GM12878 (cell line): ENCODE measurements at regions of chr19 and their contacts with region 1.

Region 1: DNA sequence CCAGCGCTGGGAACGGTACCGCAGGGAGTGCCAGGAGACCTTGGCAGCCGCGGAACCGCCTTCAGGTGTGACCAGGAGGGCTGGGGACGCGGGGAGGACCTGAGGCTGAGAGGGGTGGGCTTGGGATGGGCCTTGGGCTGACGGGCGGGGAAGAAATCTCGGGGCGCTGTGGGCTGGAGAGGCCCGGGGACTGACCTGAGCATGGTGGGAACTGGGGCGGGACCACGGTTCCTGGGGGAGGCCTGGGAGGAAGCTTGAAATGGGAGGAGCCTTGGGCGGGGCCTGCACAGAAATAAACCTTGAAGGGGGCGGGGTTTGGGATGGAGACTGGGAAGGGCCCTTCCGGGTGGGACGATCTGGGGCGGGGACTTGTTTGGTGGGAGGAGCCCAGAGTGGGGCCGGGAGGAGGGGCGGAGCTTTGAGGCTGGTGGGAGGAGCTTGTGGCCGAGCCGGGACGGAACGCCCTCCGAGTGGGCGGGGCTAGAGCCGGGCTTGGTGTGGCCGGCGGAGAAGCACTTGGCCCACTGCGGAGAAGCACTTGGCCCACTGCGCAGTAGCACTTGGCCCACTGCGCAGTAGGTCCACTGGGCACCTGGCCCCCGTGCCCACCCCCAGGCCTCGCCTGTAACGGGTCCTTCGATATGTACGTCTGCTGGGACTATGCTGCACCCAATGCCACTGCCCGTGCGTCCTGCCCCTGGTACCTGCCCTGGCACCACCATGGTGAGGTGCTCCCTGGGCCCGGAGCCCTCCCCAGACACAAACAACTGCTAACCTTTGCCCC is 2.8 kb downstream of the GIPR start:
- DNase-seq: peak; percentile 62
- ATAC-seq: peak; percentile 66
- H3K4me3 ChIP-seq: peak overlapping the region; percentile 94
- H3K27ac ChIP-seq: peak overlapping the region; percentile 37; the same call in 1 of the 2 replicates
- H3K4me1 ChIP-seq: peaks cover 9% of the 10 kb centered on the region
- H3K27me3 ChIP-seq: no peaks in the 10 kb centered on the region
- CTCF ChIP-seq: no peak
- EP300 ChIP-seq: no peak
- POLR2A ChIP-seq: no peak
- RAD21 ChIP-seq: no peak

Region 2: DNA sequence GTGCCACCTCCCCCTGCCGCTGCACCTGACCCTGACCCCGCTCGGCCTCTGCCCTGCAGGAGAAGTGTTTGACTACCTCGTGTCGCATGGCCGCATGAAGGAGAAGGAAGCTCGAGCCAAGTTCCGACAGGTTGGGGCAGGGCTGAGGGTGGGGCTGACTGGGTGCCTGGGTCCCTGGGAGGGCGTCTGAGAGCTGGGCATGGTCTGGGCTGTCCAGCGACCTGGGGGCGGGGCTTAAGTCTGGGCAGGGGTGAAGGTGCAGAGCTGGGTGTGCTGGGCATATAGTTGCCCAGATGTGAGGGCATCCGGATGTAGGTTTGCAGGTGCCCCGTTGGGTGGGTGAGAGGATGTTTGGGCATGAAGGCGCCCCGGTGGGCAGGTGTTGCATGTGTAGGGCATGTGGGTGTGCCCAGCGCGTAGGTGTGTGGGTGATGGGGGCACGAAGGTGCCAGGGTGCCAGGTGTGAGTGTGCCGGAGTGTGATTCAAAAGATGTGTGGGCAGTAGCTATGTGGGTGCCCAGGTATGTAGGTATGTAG is 406.0 kb before region 1 on chr19:
- CTCF ChIA-PET with region 1: no interaction called
- POLR2A ChIA-PET with region 1: no interaction called
- RAD21 ChIA-PET with region 1: no interaction called
- SMC1A ChIA-PET with region 1: no interaction called
- in situ Hi-C with region 1: no loop called
- intact Hi-C with region 1: no loop called
- DNase-seq: no peak
- ATAC-seq: no peak
- H3K4me3 ChIP-seq: no peak overlapping the region
- H3K27ac ChIP-seq: no peak overlapping the region
- H3K4me1 ChIP-seq: no peaks in the 10 kb centered on the region
- H3K27me3 ChIP-seq: no peaks in the 10 kb centered on the region
- CTCF ChIP-seq: no peak
- EP300 ChIP-seq: no peak
- POLR2A ChIP-seq: peak; percentile 38; the same call in 1 of the 2 replicates
- RAD21 ChIP-seq: no peak

Region 3: DNA sequence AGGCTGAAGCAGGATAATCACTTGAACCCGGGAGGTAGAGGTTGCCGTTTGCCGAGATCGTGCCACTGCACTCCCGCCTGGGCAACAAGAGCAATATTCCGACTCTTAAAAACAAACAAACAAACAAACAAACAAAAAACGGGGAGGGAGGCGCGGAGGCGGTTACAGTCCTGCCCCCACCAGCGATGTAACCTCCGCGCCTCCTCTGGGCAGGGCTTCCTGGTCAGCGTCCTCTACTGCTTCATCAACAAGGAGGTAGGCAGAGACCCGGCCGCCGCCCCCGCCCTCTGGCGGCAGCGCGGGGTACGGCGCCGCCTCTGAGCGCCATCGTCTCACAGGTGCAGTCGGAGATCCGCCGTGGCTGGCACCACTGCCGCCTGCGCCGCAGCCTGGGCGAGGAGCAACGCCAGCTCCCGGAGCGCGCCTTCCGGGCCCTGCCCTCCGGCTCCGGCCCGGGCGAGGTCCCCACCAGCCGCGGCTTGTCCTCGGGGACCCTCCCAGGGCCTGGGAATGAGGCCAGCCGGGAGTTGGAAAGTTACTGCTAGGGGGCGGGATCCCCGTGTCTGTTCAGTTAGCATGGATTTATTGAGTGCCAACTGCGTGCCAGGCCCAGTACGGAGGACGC is 10.6 kb after region 1 on chr19:
- CTCF ChIA-PET with region 1: interaction called, 13 read pairs
- POLR2A ChIA-PET with region 1: interaction called, 6 read pairs
- RAD21 ChIA-PET with region 1: interaction called, 6 read pairs
- SMC1A ChIA-PET with region 1: interaction called, 9 read pairs
- in situ Hi-C with region 1: no loop called
- intact Hi-C with region 1: no loop called
- DNase-seq: no peak
- ATAC-seq: peak; percentile 94
- H3K4me3 ChIP-seq: 0 out of 2 replicates have a peak overlapping the region, but pooled peaks have one; percentile 18
- H3K27ac ChIP-seq: no peak overlapping the region
- H3K4me1 ChIP-seq: peaks cover 17% of the 10 kb centered on the region
- H3K27me3 ChIP-seq: no peaks in the 10 kb centered on the region
- CTCF ChIP-seq: peak; percentile 81 to 97 (median 93)
- EP300 ChIP-seq: no peak
- POLR2A ChIP-seq: peak; percentile 65
- RAD21 ChIP-seq: peak; percentile 51; the same call in 1 of the 2 replicates

Region 4: GRCh38 chr19:46040952-46041500 is 370.2 kb after region 1 on chr19 and contains the start of gene IGFL4:
- CTCF ChIA-PET with region 1: no interaction called
- POLR2A ChIA-PET with region 1: no interaction called
- RAD21 ChIA-PET with region 1: no interaction called
- SMC1A ChIA-PET with region 1: no interaction called
- in situ Hi-C with region 1: no loop called
- intact Hi-C with region 1: no loop called
- DNase-seq: no peak
- ATAC-seq: no peak
- H3K4me3 ChIP-seq: no peak within 1 kb of the TSS
- H3K27ac ChIP-seq: no peak within 1 kb of the TSS
- H3K4me1 ChIP-seq: no peaks in the 10 kb centered on the region
- H3K27me3 ChIP-seq: peaks cover 3 to 5% of the 10 kb centered on the region in 2 experiments; a peak in 3 of 4 replicates
- CTCF ChIP-seq: no peak
- EP300 ChIP-seq: no peak
- POLR2A ChIP-seq: no peak
- RAD21 ChIP-seq: no peak
- polyA plus RNA-seq, gene IGFL4: not detected